ENCODE measurements at regions of chr9 and their contacts with region 1.

Region 1: GRCh38 chr9:34252670-34253459 is 74.0 kb downstream of the UBAP1 start:
- DNase-seq: peak; percentile 79
- ATAC-seq: peak; percentile 64

Region 2: DNA sequence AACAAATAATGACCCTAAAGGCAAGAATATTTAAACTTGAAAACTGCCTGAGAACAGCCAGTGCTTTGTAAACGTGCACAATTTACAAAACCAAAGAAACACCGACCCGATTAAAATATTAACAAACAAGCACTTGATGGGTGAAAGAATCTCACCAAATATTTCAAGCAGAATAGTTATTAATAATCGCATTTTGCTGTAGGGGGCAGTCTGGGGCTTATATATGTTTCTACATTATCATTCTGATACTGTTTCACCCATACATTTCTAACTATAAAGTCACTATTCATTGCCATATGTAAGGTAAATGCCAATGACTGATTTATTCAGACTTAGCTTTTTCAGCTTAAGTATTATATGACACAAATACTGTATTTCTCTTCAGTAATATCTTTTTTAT is 241.9 kb before region 1 on chr9:
- intact Hi-C with region 1: loop called (anchors 10 kb)
- DNase-seq: no peak
- ATAC-seq: no peak

Region 3: GRCh38 chr9:34098307-34098706 is 154.6 kb before region 1 on chr9:
- intact Hi-C with region 1: no loop called
- DNase-seq: no peak
- ATAC-seq: no peak

Region 4: DNA sequence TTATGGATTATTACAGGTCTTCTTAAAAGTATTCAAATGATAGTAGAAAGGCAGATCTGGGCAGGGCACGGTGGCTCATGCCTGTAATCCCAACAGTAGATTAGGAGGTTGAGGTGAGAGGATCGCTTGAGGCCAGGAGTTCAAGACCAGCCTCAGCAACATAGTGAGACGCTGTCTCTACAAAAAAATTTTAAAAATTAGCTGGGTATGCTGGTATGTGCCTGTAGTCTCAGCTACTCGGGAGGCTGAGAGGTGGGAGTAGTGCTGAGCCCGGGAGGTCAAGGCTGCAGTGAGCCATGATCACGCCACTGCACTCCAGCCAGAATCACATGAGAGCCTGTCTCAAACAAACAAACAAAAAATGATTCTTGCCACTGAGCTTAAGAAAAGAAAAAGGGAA is 30.4 kb before region 1 on chr9:
- intact Hi-C with region 1: no loop called
- DNase-seq: no peak
- ATAC-seq: peak; percentile 73

Region 5: DNA sequence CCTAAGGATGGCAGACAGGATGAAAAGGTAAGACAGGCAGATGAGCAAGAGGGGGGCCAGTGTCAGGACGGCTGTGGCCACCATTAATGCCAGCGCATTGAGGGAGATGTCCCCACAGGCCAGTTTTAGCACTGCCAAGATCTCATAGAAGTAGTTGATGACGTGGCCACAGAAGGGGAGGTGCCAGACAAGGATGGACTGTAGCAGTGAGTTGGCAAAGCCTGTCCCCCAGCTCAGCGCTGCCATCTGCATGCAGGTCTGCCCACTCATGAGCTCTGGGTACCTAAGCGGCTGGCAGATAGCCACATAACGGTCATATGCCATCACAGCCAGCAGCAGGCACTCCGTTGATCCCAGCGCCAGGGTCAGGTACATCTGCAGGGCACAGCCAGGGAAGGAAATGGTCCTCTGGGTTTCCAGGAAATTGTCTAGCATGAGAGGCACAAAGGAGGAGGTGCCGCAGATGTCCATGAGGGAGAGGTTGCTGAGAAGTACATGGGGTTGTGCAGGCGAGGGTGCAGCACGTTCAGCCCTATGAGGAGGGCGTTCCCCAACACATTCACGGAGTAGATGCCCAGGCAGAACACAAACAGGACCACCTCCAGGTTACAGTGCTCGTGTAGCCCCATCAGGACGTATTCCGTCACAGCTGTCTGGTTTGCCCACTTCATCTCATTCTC is 1606.6 kb after region 1 on chr9:
- intact Hi-C with region 1: no loop called
- DNase-seq: peak; percentile 62
- ATAC-seq: peak; percentile 58